Heart left ventricle (tissue), 16 donors: ENCODE measurements at regions of chr10 and their contacts with region 1.

Region 1: GRCh38 chr10:45008524-45009161 is 7.9 kb downstream of the ZNF22 start:
- DNase-seq: no peak
- ATAC-seq: peak; percentile 64 to 92 (median 86)
- H3K4me3 ChIP-seq: no peak overlapping the region
- H3K27ac ChIP-seq: no peak overlapping the region
- H3K4me1 ChIP-seq: peaks cover 0 to 20% (median 3%) of the 10 kb centered on the region in 12 donors
- H3K27me3 ChIP-seq: no peaks in the 10 kb centered on the region
- CTCF ChIP-seq: peak; percentile 65 to 93 (median 82)
- POLR2A ChIP-seq: no peak

Region 2: DNA sequence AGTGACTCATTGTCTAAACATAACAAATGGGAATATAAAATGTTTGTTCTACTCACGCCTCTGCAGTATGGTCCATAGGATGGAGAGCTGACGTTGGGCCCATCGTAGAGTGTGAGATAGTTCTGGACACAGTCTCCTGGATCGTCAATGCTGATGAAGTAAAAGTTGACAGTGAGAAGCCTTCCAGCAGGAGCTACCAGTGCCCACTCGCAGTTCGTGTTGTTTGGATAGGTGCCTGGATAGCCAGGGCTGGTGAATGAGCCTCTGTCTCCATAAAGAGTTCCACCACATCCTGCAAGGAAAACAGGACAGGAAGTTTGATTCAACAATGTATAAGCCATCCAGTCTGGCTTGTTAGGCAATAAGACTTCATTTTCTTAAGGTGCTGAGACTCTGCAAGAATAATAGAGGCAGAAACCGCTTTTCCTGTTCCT is 227.2 kb after region 1 on chr10:
- intact Hi-C with region 1: loop called in 2 of 10 experiments (anchors 5 to 10 kb)
- DNase-seq: no peak
- ATAC-seq: peak in 2 of 4 donors; percentile 20 to 39
- H3K4me3 ChIP-seq: no peak overlapping the region
- H3K27ac ChIP-seq: no peak overlapping the region
- H3K4me1 ChIP-seq: peaks cover 0 to 6% (median 0%) of the 10 kb centered on the region in 12 donors
- H3K27me3 ChIP-seq: peaks cover 0 to 11% (median 0%) of the 10 kb centered on the region in 9 donors
- CTCF ChIP-seq: no peak
- POLR2A ChIP-seq: no peak

Region 3: DNA sequence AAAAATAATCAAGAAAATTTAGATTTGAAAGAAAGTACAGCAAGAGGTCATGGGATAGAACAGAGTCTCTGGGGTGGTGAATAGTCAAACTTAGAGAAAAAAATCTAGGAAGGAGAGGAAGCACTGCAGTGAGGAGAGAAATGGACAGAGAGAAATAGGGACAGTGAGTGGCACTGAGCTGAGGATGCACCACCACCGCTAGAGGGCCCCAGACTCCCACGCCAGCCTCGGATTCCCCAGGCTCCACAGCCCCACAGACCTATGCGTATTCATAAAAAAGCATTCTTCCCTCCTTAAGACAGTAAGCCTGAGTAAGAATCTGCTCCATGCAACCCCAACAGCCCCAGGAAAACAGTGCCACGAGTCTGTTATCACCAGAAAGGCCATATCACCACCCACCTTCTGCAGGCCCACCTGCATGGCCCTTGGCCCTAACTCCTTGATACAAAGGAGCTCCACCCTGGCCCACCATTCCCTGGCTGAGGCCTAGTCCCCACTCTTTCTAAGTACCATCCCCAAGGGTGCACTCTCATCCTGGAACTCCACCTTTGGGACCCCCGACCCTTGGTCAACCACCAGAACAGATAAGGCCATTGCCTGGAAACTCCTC is 456.4 kb after region 1 on chr10:
- intact Hi-C with region 1: loop called in 1 of 10 experiments (anchors 5 kb)
- DNase-seq: peak; percentile 72 to 86 (median 78)
- ATAC-seq: peak; percentile 87 to 93 (median 92)
- H3K4me3 ChIP-seq: no peak overlapping the region
- H3K27ac ChIP-seq: no peak overlapping the region
- H3K4me1 ChIP-seq: peaks cover 0 to 46% (median 7%) of the 10 kb centered on the region in 12 donors
- H3K27me3 ChIP-seq: no peaks in the 10 kb centered on the region
- CTCF ChIP-seq: peak; percentile 80 to 94 (median 88)
- POLR2A ChIP-seq: no peak

Region 4: GRCh38 chr10:45660876-45661411 is 652.3 kb after region 1 on chr10:
- intact Hi-C with region 1: loop called in 1 of 10 experiments (anchors 10 kb)
- DNase-seq: no peak
- ATAC-seq: no peak
- H3K4me3 ChIP-seq: no peak overlapping the region
- H3K27ac ChIP-seq: no peak overlapping the region
- H3K4me1 ChIP-seq: peaks cover 0 to 11% (median 0%) of the 10 kb centered on the region in 12 donors
- H3K27me3 ChIP-seq: no peaks in the 10 kb centered on the region
- CTCF ChIP-seq: no peak
- POLR2A ChIP-seq: no peak